ENCODE measurements at regions of chr16 and their contacts with region 1.

Region 1: DNA sequence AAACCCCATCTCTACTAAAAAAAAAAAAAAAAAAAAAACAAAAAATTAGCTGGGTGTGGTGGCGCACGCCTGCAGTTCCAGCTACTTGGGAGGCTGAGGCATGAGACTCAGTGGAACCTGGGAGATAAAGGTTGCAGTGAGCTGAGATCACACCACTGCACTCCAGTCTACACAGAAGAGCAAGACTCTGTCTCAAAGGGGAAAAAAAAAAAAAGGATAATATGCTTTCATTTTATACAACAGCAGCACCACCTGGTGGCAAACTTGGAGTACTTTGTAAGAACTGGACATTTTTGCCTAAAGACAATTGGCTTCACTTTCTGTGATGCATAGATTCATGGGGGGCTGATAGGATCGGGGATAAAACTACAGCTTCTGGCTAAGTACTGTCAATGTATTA is 8.5 kb downstream of the CHTF8 start:
- DNase-seq: peak; percentile 90
- H3K4me3 Mint-ChIP-seq: no peak overlapping the region
- H3K27ac Mint-ChIP-seq: no peak overlapping the region
- H3K4me1 Mint-ChIP-seq: peaks cover 11% of the 10 kb centered on the region
- H3K27me3 Mint-ChIP-seq: no peaks in the 10 kb centered on the region

Region 2: DNA sequence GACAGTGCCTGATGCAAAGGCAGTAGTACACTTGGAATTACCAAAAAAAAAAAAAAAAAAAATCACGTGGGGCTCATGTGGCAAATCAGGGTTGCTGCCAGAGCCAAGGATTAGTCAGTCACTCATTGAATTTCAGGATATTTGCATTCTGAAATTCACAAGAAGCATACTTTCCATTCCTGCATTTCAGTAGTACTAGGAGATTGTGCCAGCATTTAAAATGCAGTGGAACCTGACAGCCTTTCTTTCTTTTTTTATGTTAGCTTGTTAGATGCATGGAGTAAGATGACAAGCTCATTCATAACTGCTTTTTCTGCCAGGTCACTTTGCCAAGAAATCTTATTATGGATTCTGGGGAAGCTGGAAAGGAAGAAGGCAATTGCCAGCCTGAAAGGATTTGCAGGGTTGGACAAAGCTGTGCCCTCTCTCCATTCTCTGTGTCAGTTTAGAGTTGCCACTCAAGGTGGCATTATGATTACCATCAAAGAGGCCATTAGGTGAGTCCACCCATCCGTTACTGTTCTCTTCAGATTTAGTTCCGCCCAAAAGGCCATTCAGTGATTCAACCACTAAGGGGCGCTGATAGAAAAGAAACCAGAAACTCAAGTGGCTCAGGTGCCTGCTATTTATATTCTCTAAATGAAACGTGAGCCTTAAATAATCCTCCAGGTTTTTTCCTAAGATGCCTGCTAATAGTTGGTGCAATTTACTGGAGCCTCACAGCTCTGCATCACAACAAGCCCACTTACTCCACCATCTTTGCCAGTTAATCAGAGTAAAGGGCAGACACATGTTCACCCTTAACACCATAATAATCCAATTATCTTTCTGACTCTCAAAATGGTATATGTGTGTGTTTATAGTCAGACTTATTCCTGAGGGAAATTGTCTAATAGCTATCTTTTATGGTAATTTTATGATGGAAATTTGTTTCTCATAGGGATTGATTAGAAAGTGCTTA is 221.6 kb before region 1 on chr16:
- intact Hi-C with region 1: loop called (anchors 2 kb)
- DNase-seq: peak; percentile 72
- H3K4me3 Mint-ChIP-seq: no peak overlapping the region
- H3K27ac Mint-ChIP-seq: no peak overlapping the region
- H3K4me1 Mint-ChIP-seq: no peaks in the 10 kb centered on the region
- H3K27me3 Mint-ChIP-seq: no peaks in the 10 kb centered on the region

Measured in activated CD4-positive, alpha-beta T cell treated with anti-CD3 and anti-CD28 coated beads, Interleukin-2, amount 10 ng/mL, durations not matched to agents 24 days and 14 days (primary cell).